WTC11 (cell line): ENCODE measurements at regions of chr6 and their contacts with region 1.

Region 1: DNA sequence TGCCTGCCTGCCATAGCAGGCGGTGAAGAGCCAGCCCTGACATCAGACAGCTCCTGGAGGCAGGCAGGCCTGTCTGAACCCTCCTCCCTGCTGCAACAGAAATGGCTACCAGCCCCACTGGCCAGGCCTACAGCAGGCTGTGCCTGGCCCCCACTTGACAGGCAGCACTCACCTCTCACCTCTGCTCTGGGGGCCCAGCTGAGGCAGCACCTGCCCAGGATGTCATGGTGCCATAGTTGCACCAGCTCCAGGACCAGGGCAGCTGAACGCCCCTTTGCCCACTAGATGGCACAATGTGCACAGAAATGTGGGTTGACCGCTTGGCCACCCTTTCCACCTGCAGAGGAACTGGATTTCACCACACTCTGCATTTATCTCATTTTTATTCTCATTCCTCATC is 30.6 kb downstream of the MRPL14 start:
- DNase-seq: peak; percentile 71
- ATAC-seq: peak; percentile 78
- H3K4me3 Mint-ChIP-seq: no peak overlapping the region
- H3K27ac Mint-ChIP-seq: no peak overlapping the region
- H3K4me1 Mint-ChIP-seq: no peaks in the 10 kb centered on the region
- H3K27me3 Mint-ChIP-seq: no peaks in the 10 kb centered on the region
- CTCF ChIP-seq: 0 out of 2 replicates have a peak, but pooled peaks have one; percentile 26

Region 2: DNA sequence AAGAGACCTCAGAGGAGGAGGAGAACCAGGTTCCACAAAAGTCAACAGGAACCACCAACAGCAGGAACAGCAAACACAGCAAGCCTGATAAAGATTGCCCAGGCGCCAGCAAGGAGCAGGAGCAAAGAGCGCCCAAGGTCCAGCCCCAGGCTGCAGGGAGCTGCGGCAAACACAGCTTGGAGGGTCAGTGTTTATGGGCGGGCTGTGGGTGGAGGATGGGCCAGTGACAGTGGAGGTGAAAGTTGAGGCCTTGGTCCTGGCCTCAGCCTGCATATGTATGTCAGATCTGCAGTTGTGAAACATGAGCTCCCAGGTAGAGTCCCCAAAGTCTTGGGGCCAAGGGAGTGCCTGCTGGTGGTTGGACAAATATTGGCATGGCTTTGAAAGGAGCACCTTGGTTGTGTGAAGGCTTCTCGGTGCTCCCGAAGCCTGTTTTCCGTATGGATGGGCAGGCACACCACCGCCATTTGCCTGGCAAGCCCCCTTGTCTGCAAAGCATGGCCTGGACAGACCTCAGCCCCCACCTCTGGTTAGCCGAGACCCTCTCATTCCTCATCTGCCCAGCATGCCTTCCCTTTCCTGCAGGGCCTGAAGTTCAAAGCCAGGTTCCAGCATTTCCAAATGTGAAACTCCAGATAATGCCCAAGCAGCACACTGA is 60.0 kb after region 1 on chr6:
- CTCF ChIA-PET with region 1: interaction called, 18 read pairs
- POLR2A ChIA-PET with region 1: no interaction called
- DNase-seq: peak; percentile 36
- ATAC-seq: peak; percentile 48
- H3K4me3 Mint-ChIP-seq: no peak overlapping the region
- H3K27ac Mint-ChIP-seq: peak overlapping the region; percentile 77
- H3K4me1 Mint-ChIP-seq: peaks cover 26% of the 10 kb centered on the region
- H3K27me3 Mint-ChIP-seq: no peaks in the 10 kb centered on the region
- CTCF ChIP-seq: no peak

Region 3: GRCh38 chr6:44201638-44202303 is 105.2 kb after region 1 on chr6:
- CTCF ChIA-PET with region 1: no interaction called
- POLR2A ChIA-PET with region 1: no interaction called
- DNase-seq: no peak
- ATAC-seq: no peak
- H3K4me3 Mint-ChIP-seq: no peak overlapping the region
- H3K27ac Mint-ChIP-seq: peak overlapping the region; percentile 100
- H3K4me1 Mint-ChIP-seq: peaks cover 53% of the 10 kb centered on the region
- H3K27me3 Mint-ChIP-seq: no peaks in the 10 kb centered on the region; the same call in 1 of the 2 replicates
- CTCF ChIP-seq: no peak